ENCODE measurements at regions of chr4 and their contacts with region 1.

Region 1: GRCh38 chr4:166091912-166092510 is 219.0 kb downstream of the TLL1 start:
- DNase-seq: no peak
- H3K4me3 ChIP-seq: no peak overlapping the region
- H3K27ac ChIP-seq: no peak overlapping the region
- H3K4me1 ChIP-seq: no peaks in the 10 kb centered on the region
- H3K27me3 ChIP-seq: no peaks in the 10 kb centered on the region
- CTCF ChIP-seq: peak; percentile 57

Region 2: DNA sequence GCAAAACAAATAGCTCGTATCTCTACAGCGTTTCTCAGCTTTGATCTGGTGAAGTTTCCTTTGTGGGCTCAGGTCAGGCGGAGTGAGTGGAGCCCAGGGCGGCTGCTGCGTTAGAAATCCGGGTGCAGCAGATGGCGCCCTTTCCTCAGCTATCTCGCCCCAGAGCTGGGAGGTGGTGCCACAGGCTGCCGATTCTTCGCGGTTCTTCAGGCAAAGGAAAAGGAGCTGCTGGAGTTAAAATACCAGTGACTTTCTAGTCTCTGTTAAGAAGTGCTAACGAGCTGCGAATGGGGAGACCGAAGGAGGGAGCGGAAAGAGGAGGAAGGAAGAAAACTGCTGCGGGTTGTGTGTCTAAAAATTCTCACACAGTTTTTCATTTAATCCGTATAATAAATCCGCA is 598.7 kb before region 1 on chr4:
- intact Hi-C with region 1: loop called (anchors 5 kb)
- DNase-seq: peak; percentile 64
- H3K4me3 ChIP-seq: no peak overlapping the region
- H3K27ac ChIP-seq: no peak overlapping the region
- H3K4me1 ChIP-seq: peaks cover 4% of the 10 kb centered on the region
- H3K27me3 ChIP-seq: no peaks in the 10 kb centered on the region
- CTCF ChIP-seq: peak; percentile 52

Region 3: DNA sequence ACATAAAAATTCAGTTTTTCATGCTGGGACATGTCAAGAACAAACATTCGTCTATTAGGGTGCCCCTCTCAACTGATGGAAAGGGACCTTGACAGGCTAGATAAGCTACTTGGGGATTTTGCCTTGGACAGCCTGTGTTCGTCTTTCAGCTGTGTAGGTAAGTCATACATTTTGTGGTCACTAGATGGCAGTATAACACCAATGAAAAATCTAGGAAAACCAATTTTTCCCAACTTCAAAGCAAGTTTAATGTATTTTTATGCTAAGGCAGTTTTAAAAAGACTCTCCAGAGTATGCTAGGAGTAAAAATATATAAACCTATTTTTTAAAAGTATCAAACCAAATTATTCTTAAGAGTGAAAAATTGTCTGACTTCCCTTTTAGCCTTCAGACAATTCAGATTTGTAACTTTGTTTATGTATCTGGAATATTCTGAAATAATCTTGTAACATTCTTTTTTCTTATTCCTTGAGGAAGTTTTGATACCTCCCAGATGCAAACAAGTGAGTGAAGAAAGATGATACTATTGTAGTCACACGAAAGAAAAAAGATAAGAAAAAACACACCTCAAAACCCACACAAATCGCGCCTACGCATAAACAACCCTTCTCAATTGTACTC is 554.9 kb before region 1 on chr4:
- intact Hi-C with region 1: loop called (anchors 5 kb)
- DNase-seq: no peak
- H3K4me3 ChIP-seq: no peak overlapping the region
- H3K27ac ChIP-seq: no peak overlapping the region
- H3K4me1 ChIP-seq: no peaks in the 10 kb centered on the region
- H3K27me3 ChIP-seq: no peaks in the 10 kb centered on the region
- CTCF ChIP-seq: peak; percentile 73

Measured in colonic mucosa (tissue), 4 donors.